ENCODE measurements at regions of chr1 and their contacts with region 1.

Region 1: DNA sequence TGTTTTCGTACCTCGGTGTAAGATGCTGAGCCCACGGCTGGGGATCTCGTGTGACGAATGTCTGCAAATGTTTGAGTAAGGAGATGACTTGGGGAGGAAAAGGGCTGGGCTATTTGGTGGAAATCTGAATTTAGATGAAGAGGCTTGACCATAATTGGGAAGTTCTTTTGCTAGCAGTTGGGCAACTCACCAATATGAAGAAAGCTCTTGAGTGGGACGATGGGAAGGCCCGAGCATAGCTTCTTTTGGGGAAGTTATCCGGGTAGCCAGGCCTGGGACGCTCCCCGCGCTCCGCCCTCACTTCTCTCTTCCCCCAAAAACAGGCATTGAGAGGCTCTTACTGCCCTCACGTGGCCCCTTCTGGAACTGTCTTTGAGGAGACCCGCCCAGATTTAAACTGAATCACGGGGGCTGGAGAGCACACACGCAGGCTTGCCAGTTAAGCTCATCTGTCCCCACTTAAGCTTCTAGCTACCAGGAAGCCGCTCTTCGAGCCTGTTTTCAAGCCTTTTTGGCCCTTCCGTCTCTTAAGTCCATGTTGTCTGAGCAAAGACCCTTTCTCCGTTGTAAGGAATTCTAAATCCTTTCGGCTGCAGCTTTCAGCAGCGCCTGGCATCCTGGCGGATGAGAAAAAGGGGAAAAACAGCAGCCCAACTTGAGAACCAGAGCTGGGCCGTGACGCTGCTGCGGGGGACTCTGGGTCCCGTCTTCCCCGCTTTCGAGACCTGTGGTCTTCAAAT is 93.1 kb downstream of the NID1 start:
- DNase-seq: peak; percentile 88
- H3K4me3 ChIP-seq: peak overlapping the region; percentile 10
- H3K27ac ChIP-seq: peak overlapping the region; percentile 6
- H3K4me1 ChIP-seq: peaks cover 7% of the 10 kb centered on the region
- CTCF ChIP-seq: peak; percentile 88

Region 2: GRCh38 chr1:235513495-235514366 is 458.0 kb before region 1 on chr1:
- CTCF ChIA-PET with region 1: interaction called, 3 read pairs
- POLR2A ChIA-PET with region 1: no interaction called
- intact Hi-C with region 1: loop called (anchors 1 kb)
- DNase-seq: peak; percentile 65
- H3K4me3 ChIP-seq: no peak overlapping the region
- H3K27ac ChIP-seq: no peak overlapping the region
- H3K4me1 ChIP-seq: no peaks in the 10 kb centered on the region
- CTCF ChIP-seq: peak; percentile 97

Region 3: DNA sequence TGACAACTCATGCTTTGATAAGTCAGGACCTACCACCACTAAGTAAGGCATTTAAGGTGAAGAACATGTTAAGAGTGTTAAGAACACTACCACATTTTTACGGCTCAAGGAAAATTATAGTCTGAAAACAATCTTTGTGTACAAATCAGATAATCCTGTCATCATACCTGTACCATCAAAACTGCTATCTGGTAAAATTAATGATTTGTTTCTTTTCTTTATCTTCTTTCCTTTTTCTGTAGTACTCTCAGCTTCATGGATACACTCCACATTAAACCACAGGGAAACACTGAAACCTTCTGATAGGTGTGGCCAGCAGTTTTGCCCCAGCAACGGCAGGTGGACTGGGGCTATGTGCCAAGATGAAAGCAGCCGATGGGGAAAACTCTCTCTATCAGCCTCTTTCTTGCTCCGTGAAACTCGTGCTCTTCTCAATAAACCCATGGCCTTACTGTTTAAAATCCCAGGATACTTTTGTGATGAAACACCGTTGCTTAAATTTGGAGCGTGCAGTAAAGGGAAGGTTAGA is 180.1 kb before region 1 on chr1:
- CTCF ChIA-PET with region 1: no interaction called
- POLR2A ChIA-PET with region 1: no interaction called
- intact Hi-C with region 1: loop called (anchors 5 kb)
- DNase-seq: no peak
- H3K4me3 ChIP-seq: no peak overlapping the region
- H3K27ac ChIP-seq: no peak overlapping the region
- H3K4me1 ChIP-seq: peaks cover 9% of the 10 kb centered on the region
- CTCF ChIP-seq: no peak

Region 4: DNA sequence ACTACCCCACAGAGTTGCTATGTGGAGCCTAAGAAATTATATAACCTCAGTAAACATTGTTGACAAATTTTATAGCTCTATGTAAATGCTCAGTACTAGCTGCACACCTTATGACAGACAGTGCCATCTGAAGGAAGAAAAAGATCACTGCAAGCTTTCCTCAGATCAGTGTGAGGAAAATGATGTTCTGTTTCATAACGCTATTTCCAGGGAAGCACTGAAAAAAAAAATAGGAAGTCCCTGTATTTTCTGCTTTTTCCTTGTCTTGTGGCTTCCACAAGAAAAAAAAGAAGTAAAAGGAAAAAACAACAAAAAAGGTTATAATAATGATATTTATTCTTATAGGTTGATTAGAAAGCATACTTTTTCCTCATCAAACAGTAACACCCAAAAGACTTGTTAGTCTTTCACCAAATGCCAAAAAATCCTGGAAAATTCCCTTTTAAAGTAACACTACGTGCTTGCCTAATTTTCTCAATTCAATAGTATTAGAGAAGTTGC is 128.2 kb before region 1 on chr1:
- CTCF ChIA-PET with region 1: interaction called, 10 read pairs
- POLR2A ChIA-PET with region 1: interaction called, 5 read pairs
- intact Hi-C with region 1: loop called (anchors 2 kb)
- DNase-seq: peak; percentile 39
- H3K4me3 ChIP-seq: no peak overlapping the region
- H3K27ac ChIP-seq: no peak overlapping the region
- H3K4me1 ChIP-seq: peaks cover 26% of the 10 kb centered on the region
- CTCF ChIP-seq: peak; percentile 82

Measured in OCI-LY7 (cell line).